MCF 10A (cell line): ENCODE measurements at regions of chr19 and their contacts with region 1.

Region 1: GRCh38 chr19:34120846-34121639 is 51.3 kb upstream of the LSM14A start:
- DNase-seq: peak; percentile 66
- H3K4me3 Mint-ChIP-seq: no peak overlapping the region
- H3K27ac Mint-ChIP-seq: no peak overlapping the region
- H3K4me1 Mint-ChIP-seq: no peaks in the 10 kb centered on the region
- H3K27me3 Mint-ChIP-seq: peaks cover 53% of the 10 kb centered on the region
- CTCF ChIP-seq: peak; percentile 75

Region 2: DNA sequence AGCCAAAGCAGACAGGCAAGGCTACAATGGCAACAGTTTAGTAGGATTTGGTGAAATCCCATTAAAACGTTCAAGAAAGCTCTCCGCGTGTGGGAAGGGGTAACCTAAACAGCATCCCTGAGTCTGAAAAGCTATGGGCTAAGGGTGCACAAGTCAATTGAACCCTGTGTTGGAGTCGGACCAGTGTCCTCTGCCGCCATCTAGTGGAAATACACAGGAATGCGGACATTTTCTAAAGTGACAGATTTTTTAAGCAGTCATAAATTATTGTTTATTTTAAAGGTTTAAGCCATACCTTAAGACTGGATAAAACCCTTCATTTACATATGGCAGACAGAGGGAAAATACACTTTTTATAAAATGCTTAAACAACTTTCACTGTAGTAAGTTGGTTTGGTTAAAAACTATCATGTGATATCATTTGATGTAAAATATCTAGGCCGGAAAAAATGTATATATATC is 24.7 kb after region 1 on chr19:
- CTCF ChIA-PET with region 1: interaction called, 17 read pairs
- POLR2A ChIA-PET with region 1: no interaction called
- intact Hi-C with region 1: loop called (anchors 1 kb)
- DNase-seq: peak; percentile 77
- H3K4me3 Mint-ChIP-seq: no peak overlapping the region
- H3K27ac Mint-ChIP-seq: no peak overlapping the region
- H3K4me1 Mint-ChIP-seq: no peaks in the 10 kb centered on the region
- H3K27me3 Mint-ChIP-seq: no peaks in the 10 kb centered on the region
- CTCF ChIP-seq: peak; percentile 64

Region 3: GRCh38 chr19:34165295-34165738 is 44.3 kb after region 1 on chr19:
- CTCF ChIA-PET with region 1: no interaction called
- POLR2A ChIA-PET with region 1: no interaction called
- intact Hi-C with region 1: no loop called
- DNase-seq: no peak
- H3K4me3 Mint-ChIP-seq: no peak overlapping the region
- H3K27ac Mint-ChIP-seq: no peak overlapping the region
- H3K4me1 Mint-ChIP-seq: no peaks in the 10 kb centered on the region
- H3K27me3 Mint-ChIP-seq: peaks cover 17% of the 10 kb centered on the region
- CTCF ChIP-seq: no peak